GM10248 (cell line): ENCODE measurements at regions of chr3 and their contacts with region 1.

Region 1: GRCh38 chr3:138032567-138032966 is 22.6 kb downstream of the CLDN18 start:
- DNase-seq: no peak
- CTCF ChIP-seq: no peak

Region 2: DNA sequence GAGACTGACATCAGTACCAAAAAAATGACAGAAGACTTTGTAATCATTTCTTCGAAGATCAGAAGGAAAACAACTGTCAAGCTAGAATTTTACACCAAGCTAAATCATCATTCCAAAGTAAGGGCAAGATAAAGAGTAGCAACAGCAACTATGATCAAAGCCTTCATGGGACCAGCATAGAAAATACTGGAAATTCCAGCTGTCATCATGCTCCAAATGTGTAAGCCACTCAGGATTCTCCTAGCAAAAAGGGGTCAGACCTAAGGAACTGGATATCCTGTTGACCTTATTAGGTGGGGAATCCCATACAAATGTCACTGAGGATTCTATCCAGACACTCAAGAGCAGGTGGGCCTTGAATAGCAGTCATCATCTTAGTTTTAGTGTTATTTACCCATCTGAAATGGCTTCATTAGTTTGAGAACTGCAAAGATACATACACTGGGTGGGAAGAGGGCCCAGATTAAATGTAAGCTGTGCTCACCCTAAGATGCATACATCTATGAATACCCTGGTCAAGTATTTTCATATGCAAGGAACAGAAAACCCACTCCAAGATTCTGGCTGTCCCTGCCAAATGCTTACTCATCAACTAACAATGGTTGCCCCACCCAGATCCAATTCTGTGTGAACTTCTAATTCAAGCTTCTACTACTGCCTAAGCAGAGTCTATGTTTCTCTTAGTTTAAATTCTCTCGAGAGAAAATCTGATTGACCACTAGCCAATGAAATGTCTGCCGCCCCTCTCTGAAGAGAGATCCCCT is 10.9 kb after region 1 on chr3:
- CTCF ChIA-PET with region 1: interaction called, 44 read pairs
- POLR2A ChIA-PET with region 1: no interaction called
- DNase-seq: no peak
- CTCF ChIP-seq: no peak